ENCODE measurements at regions of chr20 and their contacts with region 1.

Region 1: DNA sequence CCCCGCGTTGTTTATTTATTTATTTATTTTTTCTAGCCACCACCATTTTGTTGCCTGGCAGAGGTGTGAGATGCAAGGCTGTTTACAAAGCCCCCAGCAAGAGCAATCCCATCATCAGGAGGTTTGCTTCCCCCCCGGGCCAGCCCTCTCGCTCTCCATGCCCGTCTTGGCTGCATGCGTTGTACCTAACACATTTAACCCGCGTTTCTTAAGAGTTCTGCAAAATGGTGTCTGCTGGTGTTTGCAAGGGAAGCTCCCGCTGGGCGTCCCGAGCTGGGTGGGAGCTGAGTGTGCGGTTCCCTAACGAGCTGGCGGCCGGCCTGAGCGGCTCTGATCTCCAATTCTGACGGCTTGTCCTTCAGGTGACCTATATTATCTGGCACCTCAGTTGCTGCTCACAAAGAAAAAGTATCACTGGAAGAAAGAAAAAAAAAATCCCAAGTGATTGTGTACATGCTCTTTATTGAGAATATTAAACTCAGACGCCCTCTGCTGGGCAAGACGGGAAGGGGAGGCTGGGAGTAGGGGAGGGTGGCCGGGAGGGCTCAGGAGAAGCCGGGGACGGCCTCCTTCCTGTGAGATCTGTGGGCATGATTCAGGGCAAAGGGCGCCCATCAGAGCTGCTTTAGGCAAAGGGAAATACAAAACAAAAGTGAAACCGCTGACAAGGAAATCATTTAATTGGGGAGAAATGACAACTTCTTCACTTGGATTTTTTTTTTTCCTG is 154.8 kb downstream of the BCAS1 start:
- DNase-seq: peak; percentile 97
- H3K4me3 Mint-ChIP-seq: peak overlapping the region; percentile 93
- H3K27ac Mint-ChIP-seq: peak overlapping the region; percentile 91
- H3K4me1 Mint-ChIP-seq: peaks cover 37% of the 10 kb centered on the region
- H3K27me3 Mint-ChIP-seq: no peaks in the 10 kb centered on the region

Region 2: DNA sequence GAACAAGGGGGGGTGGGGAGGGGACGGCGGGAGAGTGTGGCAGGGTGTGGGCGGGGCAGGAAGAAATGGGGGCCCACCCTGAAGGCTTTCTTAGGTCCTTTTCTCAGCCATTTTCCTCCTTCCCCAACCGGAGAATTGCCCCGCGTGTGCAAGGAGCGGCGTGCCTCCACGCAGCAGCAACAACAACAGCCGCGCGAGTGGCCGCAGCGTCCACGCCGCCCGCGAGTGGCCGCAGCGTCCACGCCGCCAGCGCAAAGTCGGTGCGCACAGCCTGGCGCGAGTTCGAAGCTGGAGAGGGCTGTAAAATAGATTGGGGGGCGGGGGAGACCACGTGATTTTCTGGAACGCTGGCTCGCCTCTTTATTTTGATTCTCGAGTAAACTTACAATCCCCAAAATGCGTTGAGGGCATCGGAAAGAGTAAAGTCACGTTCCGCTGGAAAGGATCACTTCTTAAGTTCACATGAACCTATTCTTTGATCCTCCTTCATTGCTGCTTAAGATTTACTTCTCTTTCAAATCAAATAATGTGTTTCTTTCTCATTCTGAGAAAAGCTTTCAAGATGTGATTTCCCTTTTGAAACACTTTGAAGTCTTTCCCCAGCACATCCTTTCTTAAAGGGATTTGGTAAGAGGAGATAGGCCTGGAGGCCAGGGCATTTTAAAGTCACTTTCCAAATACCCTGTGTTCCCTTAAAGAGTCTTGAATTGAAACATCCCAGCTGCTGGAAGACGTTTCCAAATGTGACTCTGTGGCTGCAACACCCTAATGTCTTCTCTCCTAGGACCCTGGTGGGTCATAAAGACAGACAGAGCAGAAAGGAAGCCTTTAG is 255.3 kb before region 1 on chr20:
- intact Hi-C with region 1: loop called (anchors 5 kb)
- DNase-seq: peak; percentile 82
- H3K4me3 Mint-ChIP-seq: peak overlapping the region; percentile 84
- H3K27ac Mint-ChIP-seq: peak overlapping the region; percentile 93
- H3K4me1 Mint-ChIP-seq: peaks cover 54% of the 10 kb centered on the region
- H3K27me3 Mint-ChIP-seq: no peaks in the 10 kb centered on the region

Region 3: DNA sequence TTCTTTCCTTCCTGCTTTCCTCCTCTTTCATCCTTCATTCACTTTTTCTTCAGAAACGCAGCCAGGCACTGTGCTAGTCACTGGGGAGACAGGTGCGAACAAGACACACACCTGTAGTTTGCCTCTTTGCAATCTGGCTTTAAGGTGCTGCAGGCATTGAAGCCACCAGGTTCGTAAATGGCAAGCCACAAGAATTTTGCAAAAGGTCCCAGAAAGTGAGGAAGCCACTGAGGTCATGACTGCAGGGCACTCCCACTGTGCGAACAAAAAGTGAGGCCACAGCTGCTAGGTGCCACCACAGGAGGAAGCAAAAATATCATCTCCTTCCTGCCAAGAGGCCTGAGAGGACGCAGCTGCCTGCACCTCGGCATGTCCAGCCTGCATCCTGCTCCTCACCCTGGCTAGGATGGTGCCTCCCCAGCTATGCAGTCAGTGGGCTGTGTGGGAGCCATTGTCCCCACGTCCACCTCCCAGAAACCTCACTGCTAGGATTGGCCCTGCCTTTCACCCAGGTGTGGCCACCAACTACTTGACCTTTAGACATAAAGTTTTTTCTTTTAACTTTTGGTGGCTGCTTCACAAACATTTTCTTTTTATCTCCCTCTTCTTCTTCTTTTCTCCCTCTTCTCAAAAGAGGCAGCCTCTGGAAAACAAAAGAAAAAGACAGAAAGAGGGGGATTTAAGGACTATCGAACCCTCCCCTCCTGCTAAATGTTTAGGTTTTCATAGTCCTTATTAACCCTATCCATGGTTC is 76.0 kb before region 1 on chr20:
- intact Hi-C with region 1: loop called (anchors 2 kb)
- DNase-seq: peak; percentile 88
- H3K4me3 Mint-ChIP-seq: peak overlapping the region; percentile 85
- H3K27ac Mint-ChIP-seq: peak overlapping the region; percentile 98
- H3K4me1 Mint-ChIP-seq: peaks cover 58% of the 10 kb centered on the region
- H3K27me3 Mint-ChIP-seq: no peaks in the 10 kb centered on the region

Region 4: GRCh38 chr20:53891306-53891944 is 24.2 kb before region 1 on chr20:
- intact Hi-C with region 1: loop called (anchors 2 kb)
- DNase-seq: no peak
- H3K4me3 Mint-ChIP-seq: no peak overlapping the region
- H3K27ac Mint-ChIP-seq: no peak overlapping the region
- H3K4me1 Mint-ChIP-seq: peaks cover 43% of the 10 kb centered on the region
- H3K27me3 Mint-ChIP-seq: no peaks in the 10 kb centered on the region

Region 5: DNA sequence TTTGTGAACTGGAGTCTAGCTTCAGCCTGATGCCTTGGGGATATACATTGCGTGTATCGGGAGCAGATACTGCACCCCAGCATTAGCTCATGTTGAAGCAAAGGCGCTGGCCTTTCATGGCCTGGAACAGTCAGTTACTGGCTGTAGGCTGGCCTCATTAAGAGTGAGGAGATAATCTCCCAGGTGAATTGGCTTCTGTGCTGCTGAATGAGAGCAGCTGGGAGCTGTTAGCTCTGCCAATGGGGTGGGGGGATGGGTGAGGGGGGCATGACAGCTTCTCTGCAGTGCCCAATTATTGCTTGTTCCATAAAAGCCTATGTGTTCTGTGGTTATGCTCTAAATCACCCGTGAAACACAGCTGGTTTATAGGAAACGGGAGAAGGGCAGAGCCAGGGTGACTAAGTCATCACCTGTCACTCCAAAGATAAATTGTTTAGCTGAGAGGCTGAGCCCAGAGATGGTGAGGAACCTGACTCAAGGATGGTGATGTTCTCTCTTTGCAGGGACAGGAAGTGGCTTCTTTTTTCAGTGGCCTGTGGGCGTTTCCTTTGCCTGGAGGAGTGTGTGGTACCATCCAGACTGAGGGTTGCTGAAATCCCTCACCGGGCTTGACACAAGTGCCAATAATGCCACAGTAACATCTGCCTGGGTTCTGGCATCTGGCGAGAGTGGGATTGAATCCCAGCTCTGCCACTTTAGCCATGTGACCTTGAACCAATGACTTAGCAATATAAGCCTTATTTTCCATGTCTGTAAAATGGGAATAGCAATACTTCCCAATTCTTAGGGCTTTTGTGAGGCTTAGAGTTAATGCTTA is 16.1 kb before region 1 on chr20:
- intact Hi-C with region 1: loop called (anchors 1 kb)
- DNase-seq: peak; percentile 92
- H3K4me3 Mint-ChIP-seq: peak overlapping the region; percentile 53
- H3K27ac Mint-ChIP-seq: peak overlapping the region; percentile 95
- H3K4me1 Mint-ChIP-seq: peaks cover 53% of the 10 kb centered on the region
- H3K27me3 Mint-ChIP-seq: no peaks in the 10 kb centered on the region

Region 6: GRCh38 chr20:53926428-53927028 is 10.9 kb after region 1 on chr20:
- intact Hi-C with region 1: loop called (anchors 1 kb)
- DNase-seq: no peak
- H3K4me3 Mint-ChIP-seq: peak overlapping the region; percentile 42
- H3K27ac Mint-ChIP-seq: peak overlapping the region; percentile 82
- H3K4me1 Mint-ChIP-seq: peaks cover 28% of the 10 kb centered on the region
- H3K27me3 Mint-ChIP-seq: no peaks in the 10 kb centered on the region

Region 7: GRCh38 chr20:53934421-53935343 is 19.1 kb after region 1 on chr20:
- intact Hi-C with region 1: loop called (anchors 2 kb)
- DNase-seq: peak; percentile 71
- H3K4me3 Mint-ChIP-seq: peak overlapping the region; percentile 58
- H3K27ac Mint-ChIP-seq: peak overlapping the region; percentile 93
- H3K4me1 Mint-ChIP-seq: peaks cover 42% of the 10 kb centered on the region
- H3K27me3 Mint-ChIP-seq: no peaks in the 10 kb centered on the region